CD4-positive, alpha-beta memory T cell (primary cell): ENCODE measurements at regions of chr13 and their contacts with region 1.

Region 1: DNA sequence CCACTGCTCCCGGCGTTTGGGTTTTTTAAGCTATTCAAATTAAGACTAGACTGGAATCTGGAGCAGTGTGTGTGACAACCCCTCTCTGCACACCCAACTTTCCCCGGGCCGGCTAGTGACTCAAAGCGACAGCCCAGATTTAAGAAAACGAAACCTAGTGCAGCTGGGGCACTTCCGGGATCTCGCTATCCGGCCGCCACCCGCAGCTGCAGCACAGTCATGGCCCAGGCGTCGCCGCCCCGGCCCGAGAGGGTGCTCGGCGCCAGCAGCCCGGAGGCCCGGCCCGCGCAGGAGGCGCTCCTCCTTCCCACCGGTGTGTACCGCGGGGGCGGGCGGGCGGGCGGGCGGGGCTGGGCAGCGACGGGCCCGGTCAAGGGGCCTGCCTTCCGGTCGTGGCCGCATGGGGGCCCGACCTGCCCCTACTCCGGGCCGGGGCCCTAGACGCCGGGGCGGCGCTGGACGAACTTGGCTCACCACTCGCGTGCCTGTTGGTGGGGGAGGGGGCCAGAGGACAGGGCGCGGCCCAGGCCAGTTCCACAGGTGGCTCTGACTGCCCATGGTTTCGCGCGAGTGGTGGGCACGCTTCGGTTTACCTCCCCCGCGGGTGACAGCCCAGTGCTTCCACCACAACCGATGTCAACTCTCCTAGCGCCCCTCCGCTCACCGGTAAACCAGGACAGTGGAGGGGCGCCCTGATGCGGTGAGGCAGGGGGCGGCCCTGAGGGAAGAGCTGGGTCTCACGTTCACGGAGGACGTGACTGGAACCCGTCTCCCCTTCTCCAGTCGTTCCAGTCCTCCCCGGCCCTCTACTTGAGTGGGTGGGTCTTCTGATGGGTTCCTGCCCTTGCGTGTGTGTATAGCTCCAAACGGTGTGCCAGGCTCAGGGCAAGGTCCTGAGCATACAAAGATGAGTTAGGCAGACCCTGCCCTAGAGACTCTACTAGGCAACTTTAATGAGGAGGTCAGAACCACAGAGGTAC is at the start of gene PHF11:
- DNase-seq: peak; percentile 85 to 93 (median 87)
- H3K4me3 ChIP-seq: peak within 1 kb of the TSS; percentile 58 to 74
- H3K4me3 Mint-ChIP-seq: peak within 1 kb of the TSS; percentile 98 to 99 (median 98)
- H3K27ac ChIP-seq: peak within 1 kb of the TSS; percentile 94
- H3K27ac Mint-ChIP-seq: peak within 1 kb of the TSS; percentile 99
- H3K4me1 ChIP-seq: peaks cover 54% of the 10 kb centered on the region
- H3K4me1 Mint-ChIP-seq: peaks cover 40 to 64% (median 49%) of the 10 kb centered on the region in 4 donors
- H3K27me3 ChIP-seq: no peaks in the 10 kb centered on the region
- H3K27me3 Mint-ChIP-seq: no peaks in the 10 kb centered on the region
- total RNA-seq, gene PHF11: 138 to 139 TPM

Region 2: GRCh38 chr13:49247643-49248621 is 248.1 kb before region 1 on chr13 and contains the start of gene CDADC1:
- CTCF ChIA-PET with region 1: no interaction called
- POLR2A ChIA-PET with region 1: interaction called, 4 read pairs
- intact Hi-C with region 1: loop called (anchors 5 kb)
- DNase-seq: peak; percentile 77 to 87 (median 81)
- H3K4me3 ChIP-seq: peak within 1 kb of the TSS; percentile 86 to 89
- H3K4me3 Mint-ChIP-seq: peak within 1 kb of the TSS; percentile 94 to 99 (median 97)
- H3K27ac ChIP-seq: peak within 1 kb of the TSS; percentile 89
- H3K27ac Mint-ChIP-seq: peak within 1 kb of the TSS; percentile 95 to 99 (median 97)
- H3K4me1 ChIP-seq: peaks cover 48% of the 10 kb centered on the region
- H3K4me1 Mint-ChIP-seq: peaks cover 24 to 51% (median 38%) of the 10 kb centered on the region in 4 donors
- H3K27me3 ChIP-seq: no peaks in the 10 kb centered on the region
- H3K27me3 Mint-ChIP-seq: peaks cover 0 to 4% of the 10 kb centered on the region in 2 donors
- total RNA-seq, gene CDADC1: 14.7 to 15.9 TPM

Region 3: GRCh38 chr13:49481788-49482187 is 14.3 kb before region 1 on chr13:
- CTCF ChIA-PET with region 1: interaction called, 3 read pairs
- POLR2A ChIA-PET with region 1: interaction called, 12 read pairs
- intact Hi-C with region 1: no loop called
- DNase-seq: no peak
- H3K4me3 ChIP-seq: no peak overlapping the region
- H3K4me3 Mint-ChIP-seq: no peak overlapping the region
- H3K27ac ChIP-seq: no peak overlapping the region
- H3K27ac Mint-ChIP-seq: peak overlapping the region in 1 of 7 donors; percentile 48
- H3K4me1 ChIP-seq: no peaks in the 10 kb centered on the region
- H3K4me1 Mint-ChIP-seq: peaks cover 0 to 2% (median 0%) of the 10 kb centered on the region in 4 donors
- H3K27me3 ChIP-seq: no peaks in the 10 kb centered on the region
- H3K27me3 Mint-ChIP-seq: no peaks in the 10 kb centered on the region

Region 4: GRCh38 chr13:49532593-49532992 is 36.5 kb after region 1 on chr13:
- CTCF ChIA-PET with region 1: no interaction called
- POLR2A ChIA-PET with region 1: no interaction called
- intact Hi-C with region 1: no loop called
- DNase-seq: no peak
- H3K4me3 ChIP-seq: no peak overlapping the region
- H3K4me3 Mint-ChIP-seq: no peak overlapping the region
- H3K27ac ChIP-seq: no peak overlapping the region
- H3K27ac Mint-ChIP-seq: peak overlapping the region in 4 of 7 donors; percentile 42 to 71 (median 58)
- H3K4me1 ChIP-seq: no peaks in the 10 kb centered on the region
- H3K4me1 Mint-ChIP-seq: peaks cover 0 to 11% (median 9%) of the 10 kb centered on the region in 4 donors
- H3K27me3 ChIP-seq: no peaks in the 10 kb centered on the region
- H3K27me3 Mint-ChIP-seq: no peaks in the 10 kb centered on the region

Region 5: GRCh38 chr13:49585220-49586157 is 89.4 kb after region 1 on chr13 and contains the start of gene RCBTB1:
- CTCF ChIA-PET with region 1: no interaction called
- POLR2A ChIA-PET with region 1: interaction called, 16 read pairs
- intact Hi-C with region 1: loop called (anchors 1 kb)
- DNase-seq: peak; percentile 66 to 77 (median 72)
- H3K4me3 ChIP-seq: peak within 1 kb of the TSS; percentile 64 to 76
- H3K4me3 Mint-ChIP-seq: peak within 1 kb of the TSS; percentile 88 to 99 (median 96)
- H3K27ac ChIP-seq: peak within 1 kb of the TSS; percentile 82
- H3K27ac Mint-ChIP-seq: peak within 1 kb of the TSS; percentile 80 to 96 (median 92)
- H3K4me1 ChIP-seq: peaks cover 21% of the 10 kb centered on the region
- H3K4me1 Mint-ChIP-seq: peaks cover 15 to 52% (median 41%) of the 10 kb centered on the region in 4 donors
- H3K27me3 ChIP-seq: no peaks in the 10 kb centered on the region
- H3K27me3 Mint-ChIP-seq: no peaks in the 10 kb centered on the region
- total RNA-seq, gene RCBTB1: 20.7 to 21.3 TPM

Region 6: GRCh38 chr13:49890376-49890775 is 394.3 kb after region 1 on chr13:
- CTCF ChIA-PET with region 1: no interaction called
- POLR2A ChIA-PET with region 1: no interaction called
- intact Hi-C with region 1: no loop called
- DNase-seq: no peak
- H3K4me3 ChIP-seq: no peak overlapping the region
- H3K4me3 Mint-ChIP-seq: no peak overlapping the region
- H3K27ac ChIP-seq: no peak overlapping the region
- H3K27ac Mint-ChIP-seq: no peak overlapping the region
- H3K4me1 ChIP-seq: no peaks in the 10 kb centered on the region
- H3K4me1 Mint-ChIP-seq: no peaks in the 10 kb centered on the region
- H3K27me3 ChIP-seq: no peaks in the 10 kb centered on the region
- H3K27me3 Mint-ChIP-seq: no peaks in the 10 kb centered on the region

Region 7: DNA sequence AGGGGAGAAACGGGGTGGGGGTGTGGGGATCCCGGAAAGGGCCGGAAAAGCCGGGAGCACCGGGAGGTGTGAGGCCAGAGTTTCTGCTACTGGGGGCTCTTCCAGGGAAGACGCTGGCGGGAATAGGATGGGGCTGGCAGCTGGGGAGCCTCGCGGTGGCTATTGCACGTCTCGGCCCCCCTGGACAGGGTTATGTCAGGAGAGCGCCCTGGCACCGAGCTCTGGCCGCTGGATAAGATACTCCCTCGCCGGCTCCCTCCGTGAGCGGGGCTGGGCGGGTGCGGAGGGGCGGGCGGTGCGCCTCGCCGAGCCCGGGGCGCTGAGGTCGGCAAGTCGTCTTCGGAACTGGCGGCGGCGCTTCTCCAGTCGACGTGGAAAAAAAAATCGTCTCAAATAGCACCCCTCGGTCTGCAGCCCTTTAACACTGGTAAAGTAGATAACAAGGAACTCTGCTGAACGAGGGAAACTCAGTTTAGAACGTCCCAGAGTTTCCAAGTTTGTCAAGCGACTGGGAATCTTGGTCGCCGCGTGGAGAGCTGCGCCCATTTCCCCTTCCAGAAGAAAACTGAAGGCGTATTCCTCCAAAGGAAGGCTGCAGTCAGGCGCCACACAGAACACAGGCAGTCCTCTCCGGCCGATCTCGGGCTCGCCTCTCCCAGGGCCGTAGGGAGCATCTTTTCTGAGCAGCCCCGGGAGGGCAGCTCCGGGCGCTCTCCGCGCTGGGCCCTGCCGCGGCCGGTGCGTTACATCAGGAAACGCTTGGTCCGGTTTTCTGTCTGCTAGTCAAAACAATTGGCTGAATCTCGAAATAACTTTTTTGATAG is 634.3 kb after region 1 on chr13:
- CTCF ChIA-PET with region 1: no interaction called
- POLR2A ChIA-PET with region 1: no interaction called
- intact Hi-C with region 1: loop called (anchors 5 kb)
- DNase-seq: peak; percentile 39 to 57 (median 48)
- H3K4me3 ChIP-seq: peak overlapping the region; percentile 45 to 57
- H3K4me3 Mint-ChIP-seq: peak overlapping the region; percentile 84 to 91 (median 90)
- H3K27ac ChIP-seq: peak overlapping the region; percentile 98
- H3K27ac Mint-ChIP-seq: peak overlapping the region; percentile 86 to 99 (median 90)
- H3K4me1 ChIP-seq: peaks cover 72% of the 10 kb centered on the region
- H3K4me1 Mint-ChIP-seq: peaks cover 32 to 69% (median 52%) of the 10 kb centered on the region in 4 donors
- H3K27me3 ChIP-seq: peaks cover 39% of the 10 kb centered on the region
- H3K27me3 Mint-ChIP-seq: peaks cover 19 to 49% of the 10 kb centered on the region in 2 donors